PC-3 (cell line): ENCODE measurements at regions of chr10 and their contacts with region 1.

Region 1: GRCh38 chr10:436911-437665 is 252.4 kb downstream of the DIP2C start:
- DNase-seq: peak; percentile 80
- ATAC-seq: no peak; the same call in 1 of the 2 replicates
- H3K4me3 ChIP-seq: no peak overlapping the region
- H3K27ac ChIP-seq: no peak overlapping the region
- H3K4me1 ChIP-seq: no peaks in the 10 kb centered on the region
- H3K27me3 ChIP-seq: no peaks in the 10 kb centered on the region
- CTCF ChIP-seq: no peak

Region 2: GRCh38 chr10:173741-174140 is 263.3 kb before region 1 on chr10:
- CTCF ChIA-PET with region 1: no interaction called
- POLR2A ChIA-PET with region 1: no interaction called
- intact Hi-C with region 1: no loop called
- DNase-seq: no peak
- ATAC-seq: no peak
- H3K4me3 ChIP-seq: no peak overlapping the region
- H3K27ac ChIP-seq: no peak overlapping the region
- H3K4me1 ChIP-seq: no peaks in the 10 kb centered on the region
- H3K27me3 ChIP-seq: no peaks in the 10 kb centered on the region
- CTCF ChIP-seq: no peak

Region 3: DNA sequence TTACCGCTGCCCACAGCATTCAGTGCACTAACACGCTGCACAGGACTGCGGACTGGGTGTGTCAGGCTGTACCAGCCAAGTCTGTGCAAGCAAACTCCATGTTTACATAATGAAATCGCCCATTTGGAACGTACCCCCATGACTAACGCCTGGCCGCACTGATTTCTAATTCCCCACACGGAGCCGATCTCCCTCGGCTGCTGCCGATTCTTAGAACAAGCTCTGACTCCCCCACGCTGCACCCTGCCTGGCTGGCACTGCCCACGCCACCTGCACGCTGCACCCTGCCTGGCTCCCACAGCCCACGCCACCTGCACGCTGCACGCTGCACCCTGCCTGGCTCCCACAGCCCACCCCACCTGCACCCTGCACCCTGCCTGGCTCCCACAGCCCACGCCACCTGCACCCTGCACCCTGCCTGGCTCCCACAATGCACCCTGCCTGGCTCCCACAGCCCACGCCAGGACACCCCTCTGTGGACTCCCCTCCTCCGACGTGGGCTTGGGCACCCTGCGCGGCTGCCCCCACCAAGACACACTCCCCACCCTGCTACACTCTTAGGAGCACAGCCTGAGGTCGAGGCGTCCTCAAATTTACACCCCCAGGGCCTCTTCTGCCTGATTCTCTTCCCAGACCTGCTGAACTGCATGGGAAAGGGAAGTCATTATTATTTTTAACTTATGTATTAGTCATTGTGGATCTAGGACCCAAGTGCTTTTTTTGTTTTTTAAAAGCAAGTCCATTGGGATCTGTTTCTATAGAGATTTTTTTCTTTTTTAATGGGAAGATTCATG is 98.4 kb before region 1 on chr10:
- CTCF ChIA-PET with region 1: no interaction called
- POLR2A ChIA-PET with region 1: no interaction called
- intact Hi-C with region 1: loop called (anchors 5 kb)
- DNase-seq: peak; percentile 80
- ATAC-seq: peak; percentile 73
- H3K4me3 ChIP-seq: peak overlapping the region; percentile 54
- H3K27ac ChIP-seq: peak overlapping the region; percentile 96
- H3K4me1 ChIP-seq: peaks cover 40% of the 10 kb centered on the region
- H3K27me3 ChIP-seq: no peaks in the 10 kb centered on the region
- CTCF ChIP-seq: no peak

Region 4: GRCh38 chr10:500876-501275 is 63.8 kb after region 1 on chr10:
- CTCF ChIA-PET with region 1: no interaction called
- POLR2A ChIA-PET with region 1: no interaction called
- intact Hi-C with region 1: no loop called
- DNase-seq: no peak
- ATAC-seq: no peak
- H3K4me3 ChIP-seq: no peak overlapping the region
- H3K27ac ChIP-seq: no peak overlapping the region
- H3K4me1 ChIP-seq: no peaks in the 10 kb centered on the region
- H3K27me3 ChIP-seq: no peaks in the 10 kb centered on the region
- CTCF ChIP-seq: no peak